ENCODE measurements at regions of chr16 and their contacts with region 1.

Region 1: DNA sequence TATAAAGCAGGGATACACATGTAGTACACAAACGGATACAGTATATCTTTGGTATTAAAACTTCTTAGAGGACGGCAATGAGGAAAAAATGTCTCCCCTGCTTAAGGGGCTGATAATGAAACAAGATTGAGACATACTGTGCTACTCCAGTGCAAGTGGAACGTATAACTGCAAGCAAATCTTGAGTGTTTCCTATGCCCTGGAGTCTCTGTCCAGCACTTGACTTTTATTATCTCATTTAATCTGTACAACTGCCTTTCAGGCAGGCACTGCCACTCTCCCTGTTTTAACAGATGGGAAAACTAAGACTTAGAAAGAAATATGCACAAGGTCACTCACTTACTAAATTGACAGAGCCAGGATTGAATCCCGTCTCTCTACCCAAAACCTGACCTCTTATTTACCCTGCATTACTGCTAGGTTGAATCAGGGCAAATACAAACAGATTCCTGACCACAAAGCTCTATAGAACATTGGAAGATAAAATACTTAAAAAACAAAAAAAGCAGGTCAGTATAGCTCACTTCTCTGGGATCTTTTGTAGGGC is 28.7 kb downstream of the TMC5 start:
- DNase-seq: no peak
- H3K4me3 ChIP-seq: no peak overlapping the region
- H3K27ac ChIP-seq: no peak overlapping the region
- H3K4me1 ChIP-seq: no peaks in the 10 kb centered on the region
- H3K27me3 ChIP-seq: no peaks in the 10 kb centered on the region
- CTCF ChIP-seq: no peak
- POLR2A ChIP-seq: no peak

Region 2: GRCh38 chr16:19400697-19401096 is 45.7 kb before region 1 on chr16:
- intact Hi-C with region 1: loop called (anchors 1 kb)
- DNase-seq: no peak
- H3K4me3 ChIP-seq: no peak overlapping the region
- H3K27ac ChIP-seq: no peak overlapping the region
- H3K4me1 ChIP-seq: no peaks in the 10 kb centered on the region
- H3K27me3 ChIP-seq: no peaks in the 10 kb centered on the region
- CTCF ChIP-seq: no peak
- POLR2A ChIP-seq: no peak

Region 3: GRCh38 chr16:19419691-19420060 is 26.7 kb before region 1 on chr16:
- intact Hi-C with region 1: no loop called
- DNase-seq: no peak
- H3K4me3 ChIP-seq: no peak overlapping the region
- H3K27ac ChIP-seq: no peak overlapping the region
- H3K4me1 ChIP-seq: no peaks in the 10 kb centered on the region
- H3K27me3 ChIP-seq: no peaks in the 10 kb centered on the region
- CTCF ChIP-seq: no peak
- POLR2A ChIP-seq: no peak

Region 4: DNA sequence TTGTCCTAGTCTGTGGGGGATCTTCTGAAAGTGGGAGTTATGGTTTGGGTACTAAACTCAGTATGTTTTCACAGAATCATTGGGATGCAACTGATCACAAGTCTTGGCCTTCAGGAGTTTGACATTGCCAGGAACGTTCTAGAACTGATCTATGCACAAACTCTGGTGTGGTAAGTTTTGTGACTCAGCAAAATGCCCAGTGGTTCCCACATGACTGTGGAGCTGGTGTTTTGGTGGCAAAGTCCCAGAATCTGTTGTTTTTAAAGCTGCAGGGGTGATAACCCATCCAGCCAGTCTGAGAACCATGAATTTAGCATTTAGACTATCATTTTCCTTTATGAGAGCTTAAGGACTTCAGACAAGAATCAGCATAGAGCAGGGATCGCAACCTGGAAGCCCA is 34.9 kb after region 1 on chr16:
- intact Hi-C with region 1: no loop called
- DNase-seq: no peak
- H3K4me3 ChIP-seq: no peak overlapping the region
- H3K27ac ChIP-seq: no peak overlapping the region
- H3K4me1 ChIP-seq: no peaks in the 10 kb centered on the region
- H3K27me3 ChIP-seq: no peaks in the 10 kb centered on the region
- CTCF ChIP-seq: no peak
- POLR2A ChIP-seq: no peak

Region 5: GRCh38 chr16:19502395-19503131 is 56.2 kb after region 1 on chr16:
- intact Hi-C with region 1: no loop called
- DNase-seq: peak; percentile 41 to 75
- H3K4me3 ChIP-seq: no peak overlapping the region
- H3K27ac ChIP-seq: no peak overlapping the region
- H3K4me1 ChIP-seq: no peaks in the 10 kb centered on the region
- H3K27me3 ChIP-seq: no peaks in the 10 kb centered on the region
- CTCF ChIP-seq: peak; percentile 47 to 75 (median 74)
- POLR2A ChIP-seq: no peak

Region 6: GRCh38 chr16:19513377-19514053 is 67.1 kb after region 1 on chr16:
- intact Hi-C with region 1: no loop called
- DNase-seq: no peak
- H3K4me3 ChIP-seq: no peak overlapping the region
- H3K27ac ChIP-seq: no peak overlapping the region
- H3K4me1 ChIP-seq: no peaks in the 10 kb centered on the region
- H3K27me3 ChIP-seq: no peaks in the 10 kb centered on the region
- CTCF ChIP-seq: no peak
- POLR2A ChIP-seq: no peak

Region 7: GRCh38 chr16:20004932-20005331 is 558.6 kb after region 1 on chr16:
- intact Hi-C with region 1: loop called (anchors 5 kb)
- DNase-seq: no peak
- H3K4me3 ChIP-seq: no peak overlapping the region
- H3K27ac ChIP-seq: no peak overlapping the region
- H3K4me1 ChIP-seq: no peaks in the 10 kb centered on the region
- H3K27me3 ChIP-seq: no peaks in the 10 kb centered on the region
- CTCF ChIP-seq: no peak
- POLR2A ChIP-seq: no peak

Measured in breast epithelium (tissue), 4 donors.